Heart right ventricle (tissue), 16 donors: ENCODE measurements at regions of chr19 and their contacts with region 1.

Region 1: GRCh38 chr19:10230861-10231611 is at the start of gene S1PR2:
- DNase-seq: peak; percentile 86 to 87
- ATAC-seq: peak; percentile 59 to 84 (median 72)
- H3K4me3 ChIP-seq: peak within 1 kb of the TSS; percentile 70 to 99 (median 94)
- H3K27ac ChIP-seq: peak within 1 kb of the TSS; percentile 81 to 99 (median 94)
- H3K4me1 ChIP-seq: peaks cover 8 to 65% (median 54%) of the 10 kb centered on the region in 9 donors
- H3K27me3 ChIP-seq: peaks cover 0 to 7% (median 0%) of the 10 kb centered on the region in 7 donors
- CTCF ChIP-seq: peak in 1 of 9 donors; percentile 18
- total RNA-seq, gene S1PR2: 1.8 to 12.2 (median 3.3) TPM

Region 2: DNA sequence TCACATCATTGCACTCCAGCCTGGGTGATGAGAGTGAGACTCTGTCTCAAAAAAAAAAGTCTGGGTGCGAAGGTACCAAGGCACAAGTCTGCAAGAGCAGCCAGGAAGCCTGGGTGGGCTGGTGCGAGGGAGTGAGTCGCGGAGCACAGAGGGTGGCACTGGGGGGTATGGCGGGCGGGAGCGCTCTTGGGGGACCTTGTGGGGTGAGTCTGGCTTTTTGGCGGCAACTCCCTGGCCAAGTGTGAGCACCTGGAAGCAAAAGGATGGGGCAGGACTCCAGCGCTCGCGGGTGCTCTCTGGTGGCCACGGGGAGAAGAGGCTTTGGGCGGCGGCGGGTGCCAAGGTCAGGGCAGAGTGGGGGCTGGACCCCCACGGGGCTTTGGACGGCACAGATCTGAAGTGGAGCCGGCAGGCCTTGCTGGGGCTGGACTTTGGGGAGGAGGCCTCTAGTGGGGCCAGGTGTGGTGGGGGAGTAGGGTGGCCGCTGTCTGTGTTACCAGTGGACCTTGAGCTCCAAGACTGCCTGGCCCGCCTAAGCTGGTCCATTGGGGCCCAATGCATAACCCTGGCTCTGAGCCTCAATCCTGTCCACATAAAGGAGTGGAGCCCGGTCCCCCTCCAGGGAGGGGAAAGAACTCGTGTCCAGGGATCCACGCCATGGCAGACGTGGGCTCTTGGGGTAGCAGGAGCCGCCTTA is 118.0 kb before region 1 on chr19:
- intact Hi-C with region 1: loop called in 1 of 10 experiments (anchors 10 kb)
- DNase-seq: peak in 1 of 2 donors; percentile 58
- ATAC-seq: peak; percentile 2 to 55 (median 24)
- H3K4me3 ChIP-seq: peak overlapping the region in 1 of 10 donors; percentile 37
- H3K27ac ChIP-seq: peak overlapping the region in 2 of 10 donors; percentile 35 to 78
- H3K4me1 ChIP-seq: peaks cover 0 to 40% (median 5%) of the 10 kb centered on the region in 9 donors
- H3K27me3 ChIP-seq: no peaks in the 10 kb centered on the region
- CTCF ChIP-seq: peak in 8 of 9 donors; percentile 14 to 68 (median 53)